Brain microvascular endothelial cell (primary cell): ENCODE measurements at regions of chr9 and their contacts with region 1.

Region 1: DNA sequence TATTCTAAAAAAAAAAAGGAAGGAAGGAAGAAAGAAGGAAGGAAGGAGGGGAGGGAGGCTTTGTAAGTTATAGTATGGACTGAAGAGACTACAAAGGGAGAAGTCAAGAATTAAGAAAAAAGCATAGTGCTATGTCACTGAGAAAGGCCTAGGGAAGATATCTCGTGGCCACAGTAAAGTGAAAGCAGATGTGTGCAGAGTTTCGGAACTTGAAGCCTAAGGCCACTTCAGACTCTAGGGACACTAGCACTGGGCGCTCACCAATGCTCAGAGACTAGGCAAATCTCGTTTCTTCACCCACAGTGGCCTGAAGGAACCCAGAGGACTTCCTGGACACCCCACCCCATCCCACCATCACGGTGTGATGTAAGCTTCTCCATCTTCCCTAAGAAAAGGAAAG is 181.4 kb upstream of the TRPM3 start:
- DNase-seq: no peak
- H3K4me3 ChIP-seq: no peak overlapping the region
- H3K27ac ChIP-seq: no peak overlapping the region
- H3K27me3 ChIP-seq: no peaks in the 10 kb centered on the region
- CTCF ChIP-seq: no peak

Region 2: DNA sequence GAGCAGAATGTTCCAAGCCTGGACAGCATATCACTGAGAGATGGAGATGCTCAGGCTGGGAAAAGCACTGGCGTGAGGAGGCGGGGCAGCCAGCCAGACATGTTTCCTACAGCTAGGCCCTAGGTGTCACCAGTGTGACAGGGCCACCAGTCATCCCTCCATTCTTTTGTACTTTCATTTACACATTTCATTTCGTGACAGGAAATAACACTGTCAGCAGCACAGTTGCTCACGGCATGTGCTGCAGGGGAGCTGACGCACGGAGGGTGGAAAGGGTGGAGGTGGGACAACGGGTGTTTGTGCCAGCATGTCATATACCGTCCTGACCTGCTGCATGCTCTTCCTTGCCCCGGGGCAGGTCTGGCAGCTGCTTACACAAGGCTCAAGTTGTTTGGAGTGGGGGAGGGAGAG is 480.3 kb after region 1 on chr9:
- in situ Hi-C with region 1: loop called (anchors 25 kb)
- DNase-seq: peak; percentile 36
- H3K4me3 ChIP-seq: no peak overlapping the region
- H3K27ac ChIP-seq: no peak overlapping the region
- H3K27me3 ChIP-seq: no peaks in the 10 kb centered on the region
- CTCF ChIP-seq: no peak